ENCODE measurements at regions of chrX and their contacts with region 1.

Region 1: GRCh38 chrX:20181598-20182329 is 40.1 kb upstream of the EIF1AX start:
- DNase-seq: no peak
- H3K4me3 Mint-ChIP-seq: no peak overlapping the region
- H3K27ac Mint-ChIP-seq: peak overlapping the region; percentile 71
- H3K4me1 Mint-ChIP-seq: peaks cover 18% of the 10 kb centered on the region
- H3K27me3 Mint-ChIP-seq: no peaks in the 10 kb centered on the region

Region 2: DNA sequence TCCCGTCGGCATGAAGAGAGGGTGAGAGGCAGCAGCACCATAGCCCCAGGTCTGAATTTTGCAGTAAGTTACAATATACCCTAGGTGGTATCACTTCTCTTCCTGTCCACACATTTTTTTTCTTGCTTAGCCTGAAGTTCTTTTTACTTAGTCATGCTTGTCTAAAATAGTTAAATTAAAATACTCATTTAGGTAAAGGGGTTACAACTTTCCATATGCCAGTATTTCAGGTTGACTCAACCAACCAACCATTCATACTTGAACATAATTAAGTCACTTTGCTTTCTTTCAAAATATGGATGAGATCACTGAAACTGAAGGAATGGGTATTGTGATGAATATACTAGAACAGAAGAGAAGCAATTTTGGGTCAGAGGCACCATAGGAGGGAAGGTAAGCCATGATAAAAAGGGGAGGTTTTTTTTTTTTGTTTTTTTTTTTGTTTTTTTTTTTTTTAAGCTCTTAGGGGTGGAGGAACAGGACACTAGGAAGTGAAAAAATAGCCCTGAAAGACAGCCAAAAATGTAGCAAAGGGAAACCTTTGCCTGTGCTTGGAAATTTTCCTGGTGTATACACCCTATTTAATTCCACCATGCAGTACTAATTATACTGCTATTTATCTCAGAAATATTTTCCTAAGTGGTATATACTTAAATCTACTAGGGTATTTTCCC is 43.2 kb after region 1 on chrX:
- intact Hi-C with region 1: loop called (anchors 1 kb)
- DNase-seq: no peak
- H3K4me3 Mint-ChIP-seq: no peak overlapping the region
- H3K27ac Mint-ChIP-seq: peak overlapping the region; percentile 10
- H3K4me1 Mint-ChIP-seq: peaks cover 21% of the 10 kb centered on the region
- H3K27me3 Mint-ChIP-seq: no peaks in the 10 kb centered on the region

Region 3: DNA sequence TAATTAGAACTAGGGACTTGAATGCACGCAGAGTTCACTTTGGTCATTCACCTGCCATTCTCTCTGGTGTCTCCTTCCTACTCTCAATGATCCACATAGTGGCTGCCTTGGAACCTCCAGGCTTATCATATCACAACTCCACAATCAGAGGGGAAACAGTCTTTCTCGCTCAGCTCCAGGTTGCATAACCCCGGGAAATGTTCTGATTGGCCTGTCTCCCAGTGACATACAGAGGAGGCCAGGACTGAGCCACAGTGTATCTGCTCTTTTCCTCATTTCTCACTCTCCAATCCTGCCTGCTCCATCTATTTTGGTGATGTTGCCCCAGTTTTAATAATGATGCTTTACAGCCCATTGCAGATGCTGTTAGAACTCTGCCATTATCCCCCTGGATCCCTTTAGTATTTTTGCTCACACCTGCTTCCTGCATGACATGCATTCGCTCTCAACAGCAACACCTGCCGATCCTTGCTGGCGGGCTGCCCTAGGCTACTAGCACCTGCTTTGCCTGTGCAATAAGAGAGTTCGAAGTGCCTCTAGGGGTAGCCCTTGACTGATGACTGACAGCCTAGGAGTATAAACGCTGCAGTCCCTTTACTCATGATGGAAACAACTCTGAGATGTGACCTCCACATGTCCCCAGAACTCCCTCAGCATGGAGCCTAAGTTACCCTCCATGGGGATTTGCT is 296.2 kb after region 1 on chrX:
- intact Hi-C with region 1: no loop called
- DNase-seq: no peak
- H3K4me3 Mint-ChIP-seq: no peak overlapping the region
- H3K27ac Mint-ChIP-seq: no peak overlapping the region
- H3K4me1 Mint-ChIP-seq: no peaks in the 10 kb centered on the region
- H3K27me3 Mint-ChIP-seq: peaks cover 7% of the 10 kb centered on the region